Right ventricle myocardium inferior (tissue), 1 donor: ENCODE measurements at regions of chr15 and their contacts with region 1.

Region 1: DNA sequence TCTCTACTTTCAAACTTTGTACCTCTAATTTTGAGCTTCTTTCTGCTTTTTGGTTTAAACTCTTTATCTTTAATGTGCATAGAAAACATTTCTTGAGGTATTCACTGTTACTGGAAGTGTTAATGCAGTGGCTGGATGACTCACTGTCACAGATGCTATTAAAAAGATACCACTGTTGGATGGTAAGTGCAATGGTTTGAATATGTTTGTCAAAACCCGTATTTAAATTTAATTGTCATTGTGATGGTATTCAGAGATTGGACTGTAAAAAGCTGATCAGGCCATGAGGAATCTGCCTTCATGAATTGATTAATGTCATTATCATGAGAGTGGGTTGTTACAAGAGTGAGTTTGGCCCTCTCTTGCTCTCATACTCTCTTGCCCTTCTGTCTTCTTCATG is 70.6 kb downstream of the AP4E1 start:
- DNase-seq: no peak
- ATAC-seq: no peak

Region 2: GRCh38 chr15:50996641-50997040 is 17.6 kb after region 1 on chr15:
- intact Hi-C with region 1: loop called (anchors 1 kb)
- DNase-seq: no peak
- ATAC-seq: no peak